Psoas muscle (tissue), 8 donors: ENCODE measurements at regions of chr1 and their contacts with region 1.

Region 1: GRCh38 chr1:34433099-34433498 is 256.4 kb downstream of the C1orf94 start:
- DNase-seq: no peak
- ATAC-seq: no peak
- H3K4me3 ChIP-seq: no peak overlapping the region
- H3K27ac ChIP-seq: no peak overlapping the region
- H3K4me1 ChIP-seq: no peaks in the 10 kb centered on the region
- H3K27me3 ChIP-seq: peaks cover 0 to 3% (median 3%) of the 10 kb centered on the region in 3 donors
- CTCF ChIP-seq: no peak

Region 2: DNA sequence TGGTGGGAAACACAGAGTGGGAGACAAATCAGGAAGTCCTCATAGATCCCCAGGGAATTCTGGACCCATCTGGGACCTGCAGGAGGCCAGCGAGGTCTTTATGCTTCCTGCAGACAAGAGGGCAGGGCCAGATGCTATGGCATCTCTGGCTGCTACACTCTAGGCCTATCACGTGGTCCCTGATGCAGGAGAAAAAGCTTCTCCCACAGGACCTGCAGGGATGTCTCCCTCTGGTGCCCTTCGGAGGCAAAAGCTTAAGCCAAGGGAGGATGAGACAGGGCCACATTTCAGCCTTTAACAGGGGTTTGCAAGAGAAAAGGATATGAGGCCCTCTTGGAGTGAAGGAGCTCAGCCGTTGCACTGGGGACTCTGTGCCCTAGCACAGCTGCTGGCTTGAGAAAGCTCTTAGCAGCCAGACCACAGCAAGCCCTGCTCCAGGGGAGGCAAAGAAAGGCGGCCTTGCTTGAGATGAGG is 13.4 kb before region 1 on chr1:
- intact Hi-C with region 1: no loop called
- DNase-seq: no peak
- ATAC-seq: no peak
- H3K4me3 ChIP-seq: no peak overlapping the region
- H3K27ac ChIP-seq: no peak overlapping the region
- H3K4me1 ChIP-seq: no peaks in the 10 kb centered on the region
- H3K27me3 ChIP-seq: peaks cover 0 to 12% (median 5%) of the 10 kb centered on the region in 3 donors
- CTCF ChIP-seq: no peak

Region 3: DNA sequence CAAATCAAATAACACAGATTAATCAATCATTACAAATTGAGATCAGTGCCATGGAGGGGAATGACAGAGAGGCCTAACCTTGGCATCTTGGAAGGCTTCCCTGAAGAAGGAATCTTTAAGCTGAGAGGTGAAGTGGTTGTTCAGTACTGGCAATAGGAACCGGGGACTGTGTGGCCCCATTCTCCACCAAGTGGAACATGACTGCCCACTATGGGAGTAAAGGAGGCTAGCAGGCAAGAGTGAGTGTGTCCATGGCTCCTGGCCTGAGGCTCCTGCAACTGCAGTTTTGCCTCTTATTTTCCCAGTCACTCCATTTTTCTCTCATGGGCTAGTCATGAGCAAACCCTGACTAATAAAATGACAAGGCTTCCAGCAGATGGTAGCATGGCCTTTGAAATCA is 209.6 kb after region 1 on chr1:
- intact Hi-C with region 1: no loop called
- DNase-seq: no peak
- ATAC-seq: no peak
- H3K4me3 ChIP-seq: no peak overlapping the region
- H3K27ac ChIP-seq: no peak overlapping the region
- H3K4me1 ChIP-seq: no peaks in the 10 kb centered on the region
- H3K27me3 ChIP-seq: peaks cover 0 to 13% (median 5%) of the 10 kb centered on the region in 3 donors
- CTCF ChIP-seq: no peak

Region 4: DNA sequence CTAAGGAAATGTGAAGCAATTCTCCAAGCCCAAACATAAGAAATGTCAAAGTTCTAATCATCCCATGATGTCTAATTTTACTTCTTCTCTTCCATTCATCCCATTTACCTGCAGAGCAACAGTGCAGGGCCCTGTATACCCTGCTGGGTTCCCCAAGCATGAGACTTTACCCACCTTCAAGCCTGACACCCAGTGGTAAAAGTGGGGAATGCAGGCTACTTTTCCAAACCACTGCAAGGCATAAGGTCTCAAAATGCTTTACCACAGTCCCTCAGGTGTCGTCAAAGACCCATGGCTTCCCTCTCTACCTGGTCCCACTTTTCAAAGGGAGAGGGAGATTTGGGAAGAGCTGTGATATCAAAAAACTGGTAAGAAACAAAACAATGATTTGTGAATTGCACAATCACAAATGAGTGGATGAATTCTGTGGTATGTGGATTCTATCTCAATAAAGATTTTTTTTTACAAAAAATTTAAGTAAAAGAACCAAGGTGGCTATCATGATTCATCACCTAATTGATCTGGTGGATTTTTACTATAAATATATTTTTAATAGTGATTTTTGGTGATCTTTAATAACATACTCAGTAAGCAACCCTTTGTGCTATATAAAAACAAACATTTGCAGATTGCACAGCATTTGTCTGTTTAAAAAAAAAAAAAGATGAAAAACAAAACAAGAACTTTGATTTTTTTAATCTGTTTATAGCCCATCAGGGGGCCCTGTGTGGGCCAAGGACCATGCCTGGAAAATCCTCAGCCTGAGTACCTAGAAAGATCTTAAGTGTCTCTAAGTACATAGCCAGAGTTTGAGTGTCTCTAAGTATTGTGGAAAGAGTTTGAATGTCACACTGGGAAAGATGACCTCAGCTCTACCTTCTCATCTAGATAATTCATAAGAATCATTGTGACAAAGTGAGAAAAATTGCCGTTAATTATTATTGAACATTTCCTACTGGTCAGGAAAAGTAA is 248.7 kb after region 1 on chr1:
- intact Hi-C with region 1: loop called in 1 of 2 experiments (anchors 10 kb)
- DNase-seq: no peak
- ATAC-seq: peak in 2 of 4 donors; percentile 41 to 48
- H3K4me3 ChIP-seq: no peak overlapping the region
- H3K27ac ChIP-seq: no peak overlapping the region
- H3K4me1 ChIP-seq: no peaks in the 10 kb centered on the region
- H3K27me3 ChIP-seq: no peaks in the 10 kb centered on the region
- CTCF ChIP-seq: peak; percentile 65